Left colon (tissue), 2 donors: ENCODE measurements at regions of chr1 and their contacts with region 1.

Region 1: DNA sequence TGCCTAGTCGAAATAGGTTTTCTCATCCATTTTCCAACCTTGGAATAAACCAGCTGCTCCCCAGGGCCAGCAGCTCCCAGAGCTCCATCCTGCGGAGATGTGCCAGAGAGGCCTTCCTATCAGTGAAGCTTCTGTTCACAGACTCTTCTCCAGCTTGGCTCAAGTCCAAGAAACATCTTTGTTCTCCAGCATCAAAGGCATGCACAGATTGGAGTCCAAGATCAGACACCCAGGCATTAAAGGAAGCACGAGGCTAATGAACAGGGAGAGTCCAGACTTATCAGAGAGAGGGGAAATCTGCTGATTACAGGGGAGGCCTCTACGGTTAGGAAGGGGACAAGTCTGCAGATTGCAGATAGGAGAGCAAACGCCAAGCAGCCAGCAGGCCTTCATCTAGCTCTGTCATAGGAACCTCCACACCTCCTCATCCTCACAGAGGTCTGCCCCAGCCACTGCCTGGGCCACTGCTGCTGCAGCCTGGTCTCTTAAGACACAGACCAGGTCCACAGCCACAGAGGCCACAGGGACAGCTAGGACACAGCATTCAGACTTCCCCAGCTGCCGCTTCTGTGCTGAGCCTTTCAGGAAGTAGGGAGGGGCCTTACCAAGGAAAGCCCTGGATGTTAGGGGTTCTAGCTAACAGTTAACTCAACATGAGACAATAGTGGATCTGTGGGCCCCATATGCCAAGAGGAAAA is 3.4 kb downstream of the PRR9 start:
- DNase-seq: no peak
- ATAC-seq: no peak

Region 2: DNA sequence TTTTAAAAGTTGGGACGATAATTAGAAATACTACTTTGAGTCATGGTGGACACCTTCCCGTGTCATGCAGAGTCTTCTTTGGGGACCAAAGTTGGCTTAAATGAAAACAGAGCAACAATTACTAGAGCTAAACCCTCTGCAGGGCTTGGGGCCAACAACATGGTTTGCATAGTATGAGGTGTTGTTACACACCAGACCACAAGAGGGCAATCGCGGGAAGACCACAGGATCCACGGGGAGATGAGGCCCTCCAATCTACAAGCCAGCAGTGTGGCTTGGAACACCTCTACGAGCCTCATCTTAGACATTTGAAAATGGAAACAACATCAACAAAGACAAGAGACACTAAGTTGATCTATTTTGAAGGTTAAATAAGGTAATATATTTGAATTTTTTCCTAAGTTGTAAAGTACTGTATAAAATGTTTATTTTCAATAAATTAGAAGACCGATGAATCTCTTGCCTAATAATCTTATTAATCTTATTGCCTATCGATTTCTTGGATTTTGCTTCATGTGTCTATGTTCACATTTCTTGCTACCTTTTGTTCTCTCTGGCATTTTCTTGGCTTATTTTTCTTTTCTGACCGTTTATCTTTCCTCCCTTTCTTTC is 350.8 kb before region 1 on chr1:
- intact Hi-C with region 1: loop called in 1 of 2 experiments (anchors 10 kb)
- DNase-seq: peak; percentile 36 to 64
- ATAC-seq: peak; percentile 68

Region 3: GRCh38 chr1:153432874-153433681 is 212.3 kb after region 1 on chr1:
- intact Hi-C with region 1: no loop called
- DNase-seq: no peak
- ATAC-seq: no peak